ENCODE measurements at regions of chrX and their contacts with region 1.

Region 1: DNA sequence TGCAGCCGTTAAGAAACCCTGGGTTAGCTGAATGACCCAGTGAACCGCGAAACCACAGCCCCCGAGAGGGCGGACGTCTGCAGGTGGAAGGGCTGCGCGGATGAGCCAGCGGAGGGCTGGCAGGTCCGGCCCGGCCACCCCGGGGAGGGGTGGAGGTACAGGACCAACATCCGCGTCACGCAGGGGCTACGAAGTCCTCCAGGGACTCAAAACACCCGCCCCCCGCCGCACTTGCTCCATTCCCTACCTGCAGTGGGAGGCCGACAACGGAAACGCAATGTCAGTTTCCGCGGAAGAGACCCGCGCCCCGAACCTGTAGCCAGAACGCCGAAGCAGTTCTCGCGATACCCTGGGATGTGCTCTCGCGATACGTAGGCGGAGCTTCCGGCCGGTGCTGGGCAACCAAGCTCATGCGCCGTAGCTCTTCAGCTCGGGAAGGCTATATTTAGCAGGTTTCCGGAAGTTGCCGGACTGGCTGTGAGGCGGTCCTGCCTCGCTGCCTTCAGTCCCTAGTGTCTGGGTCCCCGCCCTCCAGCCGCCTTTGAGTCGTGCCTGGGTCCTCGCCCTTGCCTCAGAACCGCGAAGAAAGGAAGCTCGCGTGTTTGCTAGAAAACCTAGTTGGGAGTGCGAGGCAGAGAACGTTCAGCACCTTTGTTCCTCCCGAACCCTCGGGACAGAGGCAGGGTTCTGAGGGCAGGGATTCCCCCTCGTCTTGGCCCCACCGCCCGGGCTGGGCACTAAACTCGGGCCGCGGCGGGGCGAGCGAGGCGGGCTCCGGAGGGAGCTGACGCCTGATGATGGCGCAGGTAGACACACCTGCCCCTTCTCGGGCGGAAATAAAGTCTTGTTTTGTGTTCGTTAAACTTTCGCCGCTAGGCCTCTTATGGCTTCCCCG is at the starts of genes OFD1 and TRAPPC2:
- DNase-seq: peak; percentile 93
- ATAC-seq: peak; percentile 100
- total RNA-seq, gene OFD1: 7.0 TPM
- total RNA-seq, gene TRAPPC2: 6.8 TPM

Region 2: GRCh38 chrX:12946838-12947544 is 787.5 kb before region 1 on chrX:
- intact Hi-C with region 1: no loop called
- DNase-seq: no peak
- ATAC-seq: peak; percentile 79

Region 3: GRCh38 chrX:13620207-13620606 is 114.3 kb before region 1 on chrX:
- intact Hi-C with region 1: no loop called
- DNase-seq: no peak
- ATAC-seq: no peak

Region 4: GRCh38 chrX:13658602-13659001 is 75.9 kb before region 1 on chrX:
- intact Hi-C with region 1: loop called (anchors 5 kb)
- DNase-seq: no peak
- ATAC-seq: peak; percentile 75

Region 5: GRCh38 chrX:13791559-13791958 is 57.0 kb after region 1 on chrX:
- intact Hi-C with region 1: no loop called
- DNase-seq: no peak
- ATAC-seq: peak; percentile 69

Measured in Right ventricle myocardium superior (tissue), 1 donor.